ENCODE measurements at regions of chr10 and their contacts with region 1.

Region 1: DNA sequence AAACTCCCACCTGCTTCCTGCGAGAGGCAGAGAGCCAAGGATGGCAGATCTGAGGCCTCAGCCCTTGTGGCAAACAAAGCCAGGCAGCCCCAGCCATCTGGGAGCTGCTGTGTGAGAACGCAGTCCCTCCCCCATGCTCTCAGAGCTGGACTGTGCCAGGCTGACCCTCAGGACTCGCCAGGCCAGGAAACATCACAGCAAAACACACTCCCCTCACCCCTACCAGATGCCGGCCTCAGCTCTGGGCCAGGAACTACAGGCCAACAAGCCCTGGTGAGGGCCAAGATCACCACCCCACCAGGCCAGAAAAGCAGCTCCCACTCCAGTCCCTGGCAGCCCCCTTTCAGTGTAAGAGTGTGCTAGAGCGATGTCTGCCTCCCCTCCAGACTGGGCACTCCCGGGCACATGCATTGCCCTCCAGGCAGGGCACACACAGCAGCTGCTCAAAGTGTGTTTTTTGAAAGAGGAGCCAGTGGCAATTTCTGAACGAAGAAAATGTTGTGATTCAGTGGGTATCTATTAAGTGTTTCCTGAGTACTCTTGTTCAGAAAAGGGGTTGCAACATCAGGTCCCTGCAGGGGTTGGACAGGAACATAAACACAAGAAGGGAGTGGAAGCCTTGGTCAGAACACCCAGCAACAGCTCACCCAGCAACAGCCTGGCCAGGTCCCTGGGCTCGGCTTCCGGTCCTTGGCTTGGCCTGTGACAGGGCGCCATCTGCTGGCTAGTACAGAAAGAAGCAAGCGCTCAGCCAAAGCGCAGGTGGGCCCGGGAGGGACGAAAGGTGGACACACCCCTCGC is 18.3 kb downstream of the LRRC20 start:
- DNase-seq: peak; percentile 88
- ATAC-seq: peak; percentile 97
- H3K4me3 ChIP-seq: no peak overlapping the region
- H3K4me3 Mint-ChIP-seq: no peak overlapping the region
- H3K27ac ChIP-seq: no peak overlapping the region
- H3K27ac Mint-ChIP-seq: no peak overlapping the region
- H3K4me1 ChIP-seq: peaks cover 2 to 11% of the 10 kb centered on the region in 2 donors
- H3K4me1 Mint-ChIP-seq: peaks cover 10% of the 10 kb centered on the region
- H3K27me3 ChIP-seq: no peaks in the 10 kb centered on the region
- H3K27me3 Mint-ChIP-seq: peaks cover 3% of the 10 kb centered on the region
- CTCF ChIP-seq: peak; percentile 85

Region 2: DNA sequence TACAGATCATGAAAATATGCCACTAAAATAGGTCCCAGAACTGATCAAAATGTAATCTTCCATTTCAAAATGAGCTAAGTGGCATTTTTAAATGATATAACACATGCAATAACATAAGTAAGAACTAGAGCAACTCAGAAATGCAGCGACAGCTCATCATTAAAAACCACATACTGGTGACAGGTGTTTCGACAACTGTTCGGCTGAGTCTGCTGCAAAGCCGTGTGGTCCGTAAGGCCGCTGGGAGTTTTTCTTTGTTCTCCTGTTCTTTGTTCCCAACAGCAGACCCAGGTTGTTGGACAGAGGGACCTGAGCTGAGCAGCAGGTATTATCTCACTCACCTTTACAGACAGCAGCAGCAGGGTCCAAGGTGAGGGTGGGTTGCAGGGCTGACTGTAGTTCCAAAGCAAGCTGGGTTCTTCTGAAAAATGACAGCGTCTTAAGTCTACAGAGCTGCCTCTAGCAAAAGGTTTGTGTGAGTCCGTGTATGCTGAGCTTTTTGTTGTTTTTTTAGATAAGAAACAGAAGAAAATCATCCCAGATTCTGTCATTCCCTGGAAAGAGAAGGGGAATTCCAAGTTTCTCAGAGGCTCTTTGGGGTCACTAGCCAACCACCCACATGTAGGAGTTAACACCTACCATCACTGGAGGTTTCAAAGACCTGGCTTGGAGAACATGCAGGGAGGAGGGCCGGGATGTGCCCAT is 356.9 kb before region 1 on chr10:
- CTCF ChIA-PET with region 1: no interaction called
- POLR2A ChIA-PET with region 1: no interaction called
- intact Hi-C with region 1: no loop called
- DNase-seq: no peak
- ATAC-seq: no peak
- H3K4me3 ChIP-seq: no peak overlapping the region
- H3K4me3 Mint-ChIP-seq: no peak overlapping the region
- H3K27ac ChIP-seq: no peak overlapping the region
- H3K27ac Mint-ChIP-seq: no peak overlapping the region
- H3K4me1 ChIP-seq: no peaks in the 10 kb centered on the region
- H3K4me1 Mint-ChIP-seq: no peaks in the 10 kb centered on the region
- H3K27me3 ChIP-seq: peaks cover 0 to 4% (median 1%) of the 10 kb centered on the region in 4 experiments
- H3K27me3 Mint-ChIP-seq: peaks cover 48% of the 10 kb centered on the region
- CTCF ChIP-seq: no peak

Region 3: DNA sequence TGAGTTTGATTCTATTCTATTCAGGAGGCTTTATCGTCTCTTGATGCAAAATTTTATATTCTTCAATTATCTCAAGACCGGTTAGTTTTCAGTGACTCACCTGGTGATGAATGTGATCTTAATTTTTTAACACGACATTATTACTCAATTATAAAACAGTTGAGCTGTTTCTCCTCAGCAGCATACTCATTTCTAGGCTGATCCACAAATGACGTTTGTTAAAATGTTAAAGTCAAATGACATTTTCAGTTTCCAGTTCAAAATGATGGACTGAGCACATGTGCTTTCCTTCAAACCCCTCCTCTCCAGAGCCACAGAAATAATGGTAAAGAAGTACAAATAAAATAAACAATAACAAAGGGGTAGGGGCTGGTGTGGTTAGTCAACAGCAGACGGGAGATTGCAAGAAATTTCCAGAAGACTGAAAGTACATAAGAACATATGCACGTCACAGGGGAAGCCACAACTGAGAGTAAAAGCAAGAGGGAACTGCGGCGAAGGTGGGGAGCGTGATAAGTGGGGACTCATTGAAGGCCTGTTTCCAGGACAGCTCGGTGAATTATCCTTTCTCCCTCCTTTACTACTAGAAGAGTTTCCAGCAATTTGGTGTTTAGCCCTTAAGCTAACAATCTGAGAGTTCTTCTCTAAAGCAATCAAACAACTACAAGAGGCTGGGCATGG is 300.6 kb before region 1 on chr10:
- CTCF ChIA-PET with region 1: no interaction called
- POLR2A ChIA-PET with region 1: no interaction called
- intact Hi-C with region 1: no loop called
- DNase-seq: no peak
- ATAC-seq: no peak
- H3K4me3 ChIP-seq: no peak overlapping the region
- H3K4me3 Mint-ChIP-seq: no peak overlapping the region
- H3K27ac ChIP-seq: no peak overlapping the region
- H3K27ac Mint-ChIP-seq: no peak overlapping the region
- H3K4me1 ChIP-seq: no peaks in the 10 kb centered on the region
- H3K4me1 Mint-ChIP-seq: no peaks in the 10 kb centered on the region
- H3K27me3 ChIP-seq: no peaks in the 10 kb centered on the region
- H3K27me3 Mint-ChIP-seq: peaks cover 16% of the 10 kb centered on the region
- CTCF ChIP-seq: no peak

Region 4: GRCh38 chr10:70221030-70221429 is 143.1 kb before region 1 on chr10:
- CTCF ChIA-PET with region 1: interaction called, 778 read pairs
- POLR2A ChIA-PET with region 1: interaction called, 13 read pairs
- intact Hi-C with region 1: loop called (anchors 1 kb)
- DNase-seq: no peak
- ATAC-seq: no peak
- H3K4me3 ChIP-seq: no peak overlapping the region
- H3K4me3 Mint-ChIP-seq: no peak overlapping the region
- H3K27ac ChIP-seq: no peak overlapping the region
- H3K27ac Mint-ChIP-seq: no peak overlapping the region
- H3K4me1 ChIP-seq: peaks cover 5% of the 10 kb centered on the region in 2 donors
- H3K4me1 Mint-ChIP-seq: peaks cover 12% of the 10 kb centered on the region
- H3K27me3 ChIP-seq: no peaks in the 10 kb centered on the region
- H3K27me3 Mint-ChIP-seq: no peaks in the 10 kb centered on the region
- CTCF ChIP-seq: no peak

Region 5: GRCh38 chr10:70267161-70267933 is 96.8 kb before region 1 on chr10:
- CTCF ChIA-PET with region 1: interaction called, 185 read pairs
- POLR2A ChIA-PET with region 1: no interaction called
- intact Hi-C with region 1: loop called (anchors 1 kb)
- DNase-seq: no peak
- ATAC-seq: no peak
- H3K4me3 ChIP-seq: no peak overlapping the region
- H3K4me3 Mint-ChIP-seq: no peak overlapping the region
- H3K27ac ChIP-seq: no peak overlapping the region
- H3K27ac Mint-ChIP-seq: no peak overlapping the region
- H3K4me1 ChIP-seq: peaks cover 0 to 1% of the 10 kb centered on the region in 2 donors
- H3K4me1 Mint-ChIP-seq: peaks cover 3% of the 10 kb centered on the region
- H3K27me3 ChIP-seq: peaks cover 0 to 2% (median 0%) of the 10 kb centered on the region in 4 experiments
- H3K27me3 Mint-ChIP-seq: peaks cover 22% of the 10 kb centered on the region
- CTCF ChIP-seq: peak; percentile 34

Region 6: DNA sequence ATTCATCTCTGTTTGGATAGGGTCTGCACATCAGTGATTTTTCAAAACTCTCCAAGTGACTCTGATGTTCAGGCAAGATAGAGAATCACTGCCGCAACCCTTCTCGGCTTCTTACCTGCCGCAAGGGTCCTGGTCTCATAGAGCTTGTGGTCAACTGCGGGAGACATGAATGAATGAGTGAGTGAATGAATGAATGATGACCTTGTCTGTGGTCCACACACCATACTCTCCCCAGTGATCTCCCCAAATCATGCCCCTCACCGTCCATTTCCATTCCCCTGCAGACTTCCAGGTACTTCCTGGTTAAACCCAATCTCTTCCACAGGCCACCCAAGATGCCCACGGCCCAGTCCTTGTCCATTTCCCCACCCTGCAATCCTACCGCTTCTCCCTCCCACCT is 74.4 kb before region 1 on chr10:
- CTCF ChIA-PET with region 1: interaction called, 10 read pairs
- POLR2A ChIA-PET with region 1: no interaction called
- intact Hi-C with region 1: no loop called
- DNase-seq: no peak
- ATAC-seq: no peak
- H3K4me3 ChIP-seq: no peak overlapping the region
- H3K4me3 Mint-ChIP-seq: no peak overlapping the region
- H3K27ac ChIP-seq: no peak overlapping the region
- H3K27ac Mint-ChIP-seq: no peak overlapping the region
- H3K4me1 ChIP-seq: peaks cover 7 to 11% of the 10 kb centered on the region in 2 donors
- H3K4me1 Mint-ChIP-seq: peaks cover 11% of the 10 kb centered on the region
- H3K27me3 ChIP-seq: peaks cover 0 to 15% (median 9%) of the 10 kb centered on the region in 4 experiments
- H3K27me3 Mint-ChIP-seq: peaks cover 33% of the 10 kb centered on the region
- CTCF ChIP-seq: no peak

Region 7: DNA sequence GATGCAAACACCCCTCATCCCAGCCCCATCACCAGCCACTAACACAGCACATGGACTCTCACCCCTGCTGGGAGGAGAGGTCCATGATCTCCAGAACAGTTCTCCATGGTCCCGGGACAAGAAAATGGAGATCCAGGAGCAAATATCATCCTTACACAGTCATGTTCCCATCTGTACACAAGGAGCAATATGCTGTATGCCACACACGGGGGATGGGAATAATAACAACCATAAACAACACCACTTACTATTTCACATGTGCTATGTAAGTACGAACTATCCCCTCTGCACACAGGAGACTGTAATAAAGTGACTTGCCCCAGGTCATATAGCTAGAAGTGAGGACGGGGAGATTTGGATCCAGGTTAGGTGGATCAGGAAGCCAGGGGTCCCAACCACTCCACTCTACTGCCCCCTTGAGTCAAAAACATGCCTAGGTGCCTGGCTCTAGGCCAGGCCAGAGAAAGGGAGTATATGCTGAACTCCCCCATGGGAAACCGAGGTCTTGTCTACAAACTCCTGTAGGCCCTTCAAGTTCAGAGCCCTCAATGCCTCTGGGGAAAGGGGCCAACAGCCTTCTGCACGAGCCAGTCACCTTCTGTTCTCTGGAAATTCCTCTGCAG is 15.8 kb before region 1 on chr10:
- CTCF ChIA-PET with region 1: interaction called, 54 read pairs
- POLR2A ChIA-PET with region 1: no interaction called
- intact Hi-C with region 1: no loop called
- DNase-seq: peak; percentile 50
- ATAC-seq: peak; percentile 45
- H3K4me3 ChIP-seq: no peak overlapping the region
- H3K4me3 Mint-ChIP-seq: no peak overlapping the region
- H3K27ac ChIP-seq: no peak overlapping the region
- H3K27ac Mint-ChIP-seq: no peak overlapping the region
- H3K4me1 ChIP-seq: no peaks in the 10 kb centered on the region
- H3K4me1 Mint-ChIP-seq: no peaks in the 10 kb centered on the region
- H3K27me3 ChIP-seq: no peaks in the 10 kb centered on the region
- H3K27me3 Mint-ChIP-seq: no peaks in the 10 kb centered on the region
- CTCF ChIP-seq: no peak

Region 8: DNA sequence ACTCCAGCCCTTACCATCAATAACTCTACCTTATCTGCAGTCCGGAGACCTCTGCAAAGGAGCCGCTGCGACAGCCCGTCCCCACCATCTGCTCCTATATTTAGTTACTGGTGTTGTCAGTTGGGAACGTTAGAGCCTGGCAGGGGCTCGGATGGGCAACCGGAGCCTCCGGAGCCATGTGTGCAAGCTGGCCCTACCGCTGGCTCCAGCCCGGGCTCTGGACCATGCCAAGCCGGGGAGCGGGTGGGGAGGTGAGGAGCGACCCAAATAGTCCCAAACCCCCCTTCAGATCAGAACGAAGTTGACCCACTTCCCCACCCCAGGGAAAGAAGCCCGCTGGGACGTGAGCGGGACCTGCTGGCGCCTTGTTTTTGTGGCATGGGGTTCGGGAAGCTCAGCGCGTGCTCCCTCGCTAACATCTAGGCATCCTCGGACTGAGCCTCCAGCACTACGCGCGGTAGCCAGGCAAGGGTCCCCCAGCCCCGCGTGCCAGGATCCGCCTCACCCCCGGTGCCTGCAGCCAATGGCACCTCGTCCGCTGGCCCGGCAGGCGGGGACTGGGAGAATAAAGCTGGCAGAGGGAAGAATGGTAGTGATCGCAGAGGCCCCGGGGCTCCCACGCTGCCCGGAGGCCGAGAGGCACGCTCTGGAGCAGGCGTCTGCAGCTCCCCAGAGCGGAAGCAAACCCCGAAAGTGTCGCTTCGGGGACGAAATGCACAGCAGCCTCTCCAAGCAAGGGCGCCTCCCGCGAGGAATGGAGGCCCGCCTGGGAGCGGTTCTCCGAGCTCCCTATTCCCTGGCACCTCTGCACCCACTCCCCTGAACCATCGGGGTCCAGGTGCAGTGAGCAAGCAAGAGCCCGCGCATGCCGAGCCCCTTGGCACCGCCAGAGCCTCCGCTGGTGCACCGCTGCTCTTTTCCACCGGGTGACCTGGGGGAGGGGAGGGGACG is 17.6 kb after region 1 on chr10:
- CTCF ChIA-PET with region 1: interaction called, 12 read pairs
- POLR2A ChIA-PET with region 1: no interaction called
- intact Hi-C with region 1: no loop called
- DNase-seq: no peak
- ATAC-seq: peak; percentile 8
- H3K4me3 ChIP-seq: peak overlapping the region; percentile 56 to 70 (median 64)
- H3K4me3 Mint-ChIP-seq: peak overlapping the region; percentile 90
- H3K27ac ChIP-seq: no peak overlapping the region
- H3K27ac Mint-ChIP-seq: peak overlapping the region; percentile 41
- H3K4me1 ChIP-seq: peaks cover 7 to 14% of the 10 kb centered on the region in 2 donors
- H3K4me1 Mint-ChIP-seq: peaks cover 12% of the 10 kb centered on the region
- H3K27me3 ChIP-seq: peaks cover 0 to 26% (median 3%) of the 10 kb centered on the region in 4 experiments
- H3K27me3 Mint-ChIP-seq: peaks cover 3% of the 10 kb centered on the region
- CTCF ChIP-seq: no peak